Endothelial cell of umbilical vein (primary cell): ENCODE measurements at regions of chr11 and their contacts with region 1.

Region 1: GRCh38 chr11:60169264-60169915 is 13.5 kb downstream of the MS4A6A start:
- DNase-seq: peak; percentile 100
- H3K4me3 ChIP-seq: no peak overlapping the region
- H3K27ac ChIP-seq: peak overlapping the region; percentile 86
- H3K4me1 ChIP-seq: peaks cover 46% of the 10 kb centered on the region
- H3K27me3 ChIP-seq: no peaks in the 10 kb centered on the region
- CTCF ChIP-seq: peak; percentile 62 to 63
- POLR2A ChIP-seq: peak; percentile 93

Region 2: DNA sequence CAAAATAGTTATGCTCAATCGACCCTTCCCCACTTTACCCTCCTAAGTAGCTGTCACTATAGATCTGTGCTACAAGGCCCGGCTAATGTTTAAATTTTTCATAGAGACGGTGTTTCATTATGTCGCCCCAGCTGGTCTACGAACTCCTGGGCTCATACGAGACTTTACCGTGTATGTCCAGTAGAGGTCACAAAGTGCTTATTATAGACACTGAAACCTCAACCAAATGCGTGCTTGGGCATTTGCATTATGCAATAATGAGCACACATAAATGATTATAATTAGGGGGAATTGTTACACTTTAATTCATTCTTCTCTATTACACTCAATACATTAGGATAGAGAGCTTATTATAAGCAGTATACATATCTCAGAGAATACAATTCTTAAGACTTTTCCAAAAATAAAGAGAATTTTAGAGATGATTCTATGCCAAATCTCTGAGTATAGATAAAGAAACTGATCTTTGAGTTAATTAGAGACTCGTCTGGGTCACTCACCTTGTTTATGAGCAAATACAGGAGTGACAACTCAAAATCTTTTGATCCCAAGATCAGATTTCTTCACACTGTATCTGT is 346.3 kb before region 1 on chr11:
- CTCF ChIA-PET with region 1: interaction called, 8 read pairs
- POLR2A ChIA-PET with region 1: no interaction called
- dilution Hi-C with region 1: no loop called
- intact Hi-C with region 1: loop called (anchors 1 kb)
- DNase-seq: peak; percentile 87
- H3K4me3 ChIP-seq: no peak overlapping the region
- H3K27ac ChIP-seq: no peak overlapping the region
- H3K4me1 ChIP-seq: no peaks in the 10 kb centered on the region
- H3K27me3 ChIP-seq: no peaks in the 10 kb centered on the region
- CTCF ChIP-seq: peak; percentile 48 to 67
- POLR2A ChIP-seq: no peak

Region 3: GRCh38 chr11:60005360-60005759 is 164.0 kb before region 1 on chr11:
- CTCF ChIA-PET with region 1: no interaction called
- POLR2A ChIA-PET with region 1: no interaction called
- dilution Hi-C with region 1: no loop called
- intact Hi-C with region 1: no loop called
- DNase-seq: no peak
- H3K4me3 ChIP-seq: no peak overlapping the region
- H3K27ac ChIP-seq: no peak overlapping the region
- H3K4me1 ChIP-seq: no peaks in the 10 kb centered on the region
- H3K27me3 ChIP-seq: peaks cover 0 to 2% of the 10 kb centered on the region in 2 experiments
- CTCF ChIP-seq: no peak
- POLR2A ChIP-seq: no peak

Region 4: GRCh38 chr11:60130496-60130895 is 38.9 kb before region 1 on chr11:
- CTCF ChIA-PET with region 1: interaction called, 4 read pairs
- POLR2A ChIA-PET with region 1: no interaction called
- dilution Hi-C with region 1: no loop called
- intact Hi-C with region 1: loop called (anchors 1 kb)
- DNase-seq: peak; percentile 86
- H3K4me3 ChIP-seq: no peak overlapping the region
- H3K27ac ChIP-seq: no peak overlapping the region
- H3K4me1 ChIP-seq: peaks cover 12% of the 10 kb centered on the region
- H3K27me3 ChIP-seq: no peaks in the 10 kb centered on the region
- CTCF ChIP-seq: peak; percentile 24 to 44
- POLR2A ChIP-seq: no peak

Region 5: DNA sequence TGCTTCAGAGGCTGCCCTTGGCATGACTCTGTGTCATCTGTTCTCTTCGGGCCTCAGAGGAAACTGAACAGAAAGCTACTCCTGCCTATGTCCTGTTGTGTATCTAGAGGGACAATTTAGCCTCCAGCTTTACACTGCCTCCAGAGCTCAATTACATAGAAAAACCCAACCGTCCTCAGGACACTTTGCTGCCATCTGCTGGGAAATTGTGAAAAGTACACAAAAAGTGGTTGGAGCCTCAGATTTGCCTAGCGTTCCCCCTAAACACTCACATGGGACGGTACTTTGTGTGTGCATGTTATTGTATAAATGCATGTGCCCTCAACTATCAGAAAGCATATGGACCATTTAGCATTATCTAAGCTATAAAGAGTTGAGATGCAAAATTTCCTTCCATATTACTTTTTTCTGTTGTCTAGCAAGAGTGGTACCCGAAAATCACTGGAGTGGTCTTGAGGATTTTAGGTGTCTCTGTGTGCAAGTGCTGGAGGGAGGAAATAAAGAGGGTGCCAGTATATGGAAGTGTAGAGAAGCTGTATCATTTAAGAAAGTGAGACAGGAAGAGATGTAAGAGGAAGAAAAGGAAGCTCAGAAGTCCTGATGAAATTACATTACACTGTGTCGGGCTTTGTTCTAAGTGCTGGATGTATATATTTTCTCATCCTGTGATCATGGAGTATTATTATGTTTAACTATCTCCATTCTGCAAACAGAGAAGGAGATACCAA is 82.3 kb after region 1 on chr11:
- CTCF ChIA-PET with region 1: interaction called, 217 read pairs
- POLR2A ChIA-PET with region 1: interaction called, 4 read pairs
- dilution Hi-C with region 1: no loop called
- intact Hi-C with region 1: loop called (anchors 1 kb)
- DNase-seq: peak; percentile 89
- H3K4me3 ChIP-seq: no peak overlapping the region
- H3K27ac ChIP-seq: no peak overlapping the region
- H3K4me1 ChIP-seq: peaks cover 22% of the 10 kb centered on the region
- H3K27me3 ChIP-seq: peaks cover 0 to 3% of the 10 kb centered on the region in 2 experiments
- CTCF ChIP-seq: peak; percentile 43 to 58
- POLR2A ChIP-seq: no peak

Region 6: GRCh38 chr11:60363542-60364510 is 194.4 kb after region 1 on chr11:
- CTCF ChIA-PET with region 1: interaction called, 3 read pairs
- POLR2A ChIA-PET with region 1: no interaction called
- dilution Hi-C with region 1: no loop called
- intact Hi-C with region 1: loop called (anchors 1 kb)
- DNase-seq: peak; percentile 67
- H3K4me3 ChIP-seq: no peak overlapping the region
- H3K27ac ChIP-seq: no peak overlapping the region
- H3K4me1 ChIP-seq: no peaks in the 10 kb centered on the region
- H3K27me3 ChIP-seq: peaks cover 15 to 16% of the 10 kb centered on the region in 2 experiments
- CTCF ChIP-seq: peak; percentile 66 to 68
- POLR2A ChIP-seq: no peak